ENCODE measurements at regions of chr15 and their contacts with region 1.

Region 1: GRCh38 chr15:48330855-48331795 is at the start of gene DUT:
- DNase-seq: peak; percentile 93
- H3K4me3 ChIP-seq: peak within 1 kb of the TSS; percentile 57 to 87 (median 72)
- H3K27ac ChIP-seq: peak within 1 kb of the TSS; percentile 94 to 98 (median 96)
- H3K4me1 ChIP-seq: peaks cover 0 to 20% (median 15%) of the 10 kb centered on the region in 4 donors
- H3K27me3 ChIP-seq: no peaks in the 10 kb centered on the region
- CTCF ChIP-seq: no peak
- EP300 ChIP-seq: no peak
- POLR2A ChIP-seq: peak; percentile 79 to 85
- total RNA-seq, gene DUT: 76.2 to 109 (median 102) TPM

Region 2: GRCh38 chr15:48177766-48178647 is 153.1 kb before region 1 on chr15 and contains the start of gene MYEF2:
- intact Hi-C with region 1: loop called (anchors 5 kb)
- DNase-seq: peak; percentile 83
- H3K4me3 ChIP-seq: peak within 1 kb of the TSS; percentile 61 to 75 (median 68)
- H3K27ac ChIP-seq: peak within 1 kb of the TSS; percentile 84 to 94 (median 90)
- H3K4me1 ChIP-seq: peaks cover 0 to 14% (median 2%) of the 10 kb centered on the region in 4 donors
- H3K27me3 ChIP-seq: no peaks in the 10 kb centered on the region
- CTCF ChIP-seq: no peak
- EP300 ChIP-seq: no peak
- POLR2A ChIP-seq: no peak
- total RNA-seq, gene MYEF2: 21.8 to 80.4 (median 47.0) TPM

Region 3: GRCh38 chr15:48370460-48370859 is 39.3 kb after region 1 on chr15:
- intact Hi-C with region 1: no loop called
- DNase-seq: no peak
- H3K4me3 ChIP-seq: no peak overlapping the region
- H3K27ac ChIP-seq: no peak overlapping the region
- H3K4me1 ChIP-seq: no peaks in the 10 kb centered on the region
- H3K27me3 ChIP-seq: no peaks in the 10 kb centered on the region
- CTCF ChIP-seq: no peak
- EP300 ChIP-seq: no peak
- POLR2A ChIP-seq: no peak

Region 4: GRCh38 chr15:48481802-48482201 is 150.7 kb after region 1 on chr15:
- intact Hi-C with region 1: no loop called
- DNase-seq: no peak
- H3K4me3 ChIP-seq: no peak overlapping the region
- H3K27ac ChIP-seq: peak overlapping the region in 1 of 4 donors; percentile 15
- H3K4me1 ChIP-seq: no peaks in the 10 kb centered on the region
- H3K27me3 ChIP-seq: no peaks in the 10 kb centered on the region
- CTCF ChIP-seq: no peak
- EP300 ChIP-seq: no peak
- POLR2A ChIP-seq: no peak

Region 5: DNA sequence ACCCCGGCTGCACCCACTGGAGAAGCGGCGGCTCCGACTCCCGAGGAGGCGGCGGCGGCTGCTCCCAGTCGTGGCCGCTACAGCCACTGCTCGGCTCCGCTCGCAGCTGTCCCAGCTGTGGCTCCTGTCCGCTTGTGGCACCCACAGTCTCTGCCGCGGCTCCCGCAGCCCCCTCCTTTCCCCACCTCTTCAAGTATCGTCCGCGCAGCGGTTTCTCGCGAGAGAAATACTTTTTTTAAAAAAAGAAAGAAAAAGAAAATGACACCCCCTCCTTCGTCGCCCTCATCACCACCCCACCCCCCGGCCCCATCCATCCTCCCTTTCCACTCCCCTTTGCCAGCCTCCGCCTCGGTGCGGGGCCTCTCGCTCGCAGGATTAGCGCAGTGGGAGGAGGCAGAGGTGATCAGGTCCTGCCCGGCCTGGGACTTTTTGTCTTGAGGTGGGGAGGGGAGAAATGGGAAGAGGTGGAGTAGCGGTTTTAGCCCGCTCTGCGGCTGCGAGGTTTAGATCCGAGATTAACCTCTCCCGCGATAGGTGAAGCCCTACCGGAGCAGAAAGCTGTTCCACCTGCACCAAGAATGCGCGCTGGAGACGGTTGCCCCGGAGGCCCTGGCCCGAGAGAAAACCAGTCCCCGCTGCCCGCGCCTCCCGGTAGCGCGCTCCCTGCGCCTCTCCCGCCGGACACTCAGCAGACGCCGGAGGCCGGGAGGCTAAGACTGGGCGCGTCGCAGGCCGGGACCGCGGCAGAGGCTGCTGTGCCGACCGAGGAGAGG is 314.6 kb after region 1 on chr15 and contains the start of gene FBN1:
- intact Hi-C with region 1: no loop called
- DNase-seq: peak; percentile 90
- H3K4me3 ChIP-seq: peak within 1 kb of the TSS; percentile 56 to 72 (median 68)
- H3K27ac ChIP-seq: peak within 1 kb of the TSS; percentile 82 to 95 (median 86)
- H3K4me1 ChIP-seq: peaks cover 0 to 26% (median 23%) of the 10 kb centered on the region in 4 donors
- H3K27me3 ChIP-seq: peaks cover 0 to 25% (median 9%) of the 10 kb centered on the region in 3 donors
- CTCF ChIP-seq: no peak
- EP300 ChIP-seq: no peak
- POLR2A ChIP-seq: peak; percentile 43 to 67
- total RNA-seq, gene FBN1: 57.0 to 173 (median 74.7) TPM